B cell (primary cell): ENCODE measurements at regions of chr12 and their contacts with region 1.

Region 1: DNA sequence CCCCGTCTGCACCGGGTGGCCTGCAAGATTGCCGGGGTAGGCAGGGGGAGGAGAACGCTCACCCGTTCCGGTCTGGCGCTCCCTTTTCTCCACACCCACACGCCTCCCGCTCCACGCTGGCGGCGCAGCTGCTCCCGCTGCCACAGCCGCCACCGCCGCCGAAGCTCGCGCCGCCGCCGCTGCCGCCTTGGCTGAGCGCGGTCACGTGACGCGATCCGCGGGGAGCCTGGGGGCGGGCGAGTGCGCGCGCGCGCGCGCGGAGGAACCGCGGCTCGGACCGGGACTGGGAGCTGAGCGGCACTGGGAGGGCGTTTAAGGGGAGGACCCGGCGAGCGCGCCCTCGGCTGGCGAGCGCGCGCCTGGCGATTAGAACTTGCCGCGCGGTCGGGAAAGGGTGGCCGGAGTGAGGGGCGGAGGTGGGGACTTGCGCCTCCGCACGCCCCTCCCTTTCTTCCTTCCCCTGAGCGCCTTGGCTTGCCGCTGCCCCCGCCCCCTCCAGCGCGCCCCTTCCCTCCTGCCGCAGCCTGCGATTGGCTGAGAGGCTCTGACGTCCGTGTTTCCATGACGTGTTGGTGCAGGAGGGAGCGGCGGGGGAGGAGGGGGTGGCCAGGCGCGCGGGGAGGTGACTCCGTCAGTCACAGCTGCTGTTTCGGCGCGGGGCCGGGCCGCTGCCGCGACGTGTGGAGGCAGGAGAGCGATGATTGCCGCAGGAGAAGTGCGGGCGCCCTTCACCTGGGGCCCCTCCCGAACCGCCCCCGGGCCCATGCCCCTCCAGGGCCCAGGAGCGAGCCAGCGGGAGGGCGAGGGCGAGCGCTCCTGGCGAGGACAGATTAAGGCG is 738 bp upstream of the ATP2B1 start:
- DNase-seq: peak; percentile 100
- ATAC-seq: peak; percentile 72
- H3K4me3 ChIP-seq: peak overlapping the region; percentile 84 to 99 (median 97)
- H3K4me3 Mint-ChIP-seq: peak overlapping the region; percentile 93
- H3K27ac ChIP-seq: peak overlapping the region; percentile 95 to 99
- H3K27ac Mint-ChIP-seq: peak overlapping the region; percentile 98
- H3K4me1 ChIP-seq: peaks cover 15 to 31% of the 10 kb centered on the region in 2 donors
- H3K4me1 Mint-ChIP-seq: peaks cover 33% of the 10 kb centered on the region
- H3K27me3 ChIP-seq: no peaks in the 10 kb centered on the region
- H3K27me3 Mint-ChIP-seq: no peaks in the 10 kb centered on the region
- CTCF ChIP-seq: no peak

Region 2: DNA sequence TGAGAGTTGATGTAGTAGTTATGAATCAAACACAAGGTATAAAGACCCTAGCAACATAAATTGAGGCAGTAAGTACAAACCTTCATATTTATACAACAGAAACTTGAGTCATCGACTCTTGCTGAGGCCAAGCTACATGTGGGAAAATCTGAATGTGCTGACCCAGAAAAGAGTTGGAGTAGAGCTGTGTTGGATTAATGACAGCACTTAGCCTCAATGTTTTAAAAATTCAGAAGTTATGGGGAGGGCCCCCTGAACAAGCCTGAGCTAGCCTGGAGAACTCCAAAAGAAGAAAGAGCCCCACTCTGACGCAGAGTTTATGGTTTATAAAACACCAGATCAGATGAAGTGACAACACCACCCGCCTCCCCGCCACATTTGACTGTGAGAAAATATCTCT is 457.1 kb before region 1 on chr12:
- CTCF ChIA-PET with region 1: no interaction called
- POLR2A ChIA-PET with region 1: no interaction called
- intact Hi-C with region 1: no loop called
- DNase-seq: no peak
- ATAC-seq: no peak
- H3K4me3 ChIP-seq: no peak overlapping the region
- H3K4me3 Mint-ChIP-seq: no peak overlapping the region
- H3K27ac ChIP-seq: no peak overlapping the region
- H3K27ac Mint-ChIP-seq: no peak overlapping the region
- H3K4me1 ChIP-seq: no peaks in the 10 kb centered on the region
- H3K4me1 Mint-ChIP-seq: no peaks in the 10 kb centered on the region
- H3K27me3 ChIP-seq: no peaks in the 10 kb centered on the region
- H3K27me3 Mint-ChIP-seq: peaks cover 17% of the 10 kb centered on the region
- CTCF ChIP-seq: no peak

Region 3: DNA sequence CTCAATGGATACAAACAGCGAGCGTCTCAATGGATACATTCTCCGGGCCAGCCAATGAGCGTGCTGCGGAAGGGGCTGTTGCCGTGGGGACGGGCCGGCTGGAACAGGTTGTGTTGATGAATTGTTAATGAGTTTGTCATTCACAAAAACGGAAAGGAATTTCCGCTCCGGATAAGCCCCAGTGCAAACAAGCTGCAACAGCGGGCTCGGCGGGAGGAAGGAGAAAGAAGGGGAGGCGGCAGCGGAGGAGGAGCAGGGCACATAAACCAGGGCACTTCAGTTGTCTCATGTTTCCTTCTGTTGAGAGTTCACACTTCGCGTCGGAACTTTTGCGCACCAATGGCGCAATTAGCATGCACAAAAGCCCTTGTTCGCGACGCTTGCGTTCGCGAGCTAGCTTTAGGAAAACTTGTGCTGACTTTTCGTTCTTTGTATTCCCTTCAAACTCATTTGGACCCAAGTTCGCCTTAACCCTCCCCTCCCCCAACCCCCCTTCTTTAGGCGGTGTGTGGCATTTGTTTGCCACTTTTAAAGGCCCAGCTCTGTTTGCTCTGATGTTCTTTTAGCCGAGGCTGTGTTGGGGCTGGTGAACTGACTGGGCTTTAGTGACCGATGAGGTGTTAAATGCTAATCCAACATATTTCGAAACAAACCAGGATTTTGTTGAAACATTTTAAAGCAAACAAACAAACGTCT is 356.7 kb before region 1 on chr12 and contains the start of gene DUSP6:
- CTCF ChIA-PET with region 1: no interaction called
- POLR2A ChIA-PET with region 1: no interaction called
- intact Hi-C with region 1: loop called (anchors 5 kb)
- DNase-seq: peak; percentile 88
- ATAC-seq: peak; percentile 64
- H3K4me3 ChIP-seq: peak within 1 kb of the TSS; percentile 63 to 94 (median 78)
- H3K4me3 Mint-ChIP-seq: peak within 1 kb of the TSS; percentile 97
- H3K27ac ChIP-seq: peak within 1 kb of the TSS; percentile 82 to 87
- H3K27ac Mint-ChIP-seq: peak within 1 kb of the TSS; percentile 96
- H3K4me1 ChIP-seq: peaks cover 44 to 52% of the 10 kb centered on the region in 2 donors
- H3K4me1 Mint-ChIP-seq: peaks cover 68% of the 10 kb centered on the region
- H3K27me3 ChIP-seq: no peaks in the 10 kb centered on the region
- H3K27me3 Mint-ChIP-seq: no peaks in the 10 kb centered on the region
- CTCF ChIP-seq: no peak
- total RNA-seq, gene DUSP6: 1.6 and 3.2 TPM in 2 replicates

Region 4: DNA sequence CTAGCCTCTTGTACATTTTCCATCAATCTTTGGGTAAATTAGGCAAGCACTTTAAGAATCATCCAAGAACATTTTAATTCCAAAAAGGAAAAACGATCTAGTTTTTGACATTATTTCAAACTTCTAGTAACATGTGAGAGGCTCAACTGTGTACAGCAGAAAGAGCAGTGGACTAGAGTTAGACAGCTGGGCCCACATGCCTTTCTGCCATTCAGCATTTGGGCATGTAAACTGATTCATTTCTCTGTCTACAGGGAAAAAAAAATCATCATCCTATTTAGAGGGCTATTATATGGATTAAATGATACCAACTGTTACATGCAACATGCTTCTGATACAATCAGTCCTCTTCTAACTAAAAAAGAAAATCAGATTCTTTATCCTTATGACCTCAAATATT is 18.5 kb before region 1 on chr12:
- CTCF ChIA-PET with region 1: no interaction called
- POLR2A ChIA-PET with region 1: no interaction called
- intact Hi-C with region 1: no loop called
- DNase-seq: no peak
- ATAC-seq: no peak
- H3K4me3 ChIP-seq: no peak overlapping the region
- H3K4me3 Mint-ChIP-seq: no peak overlapping the region
- H3K27ac ChIP-seq: no peak overlapping the region
- H3K27ac Mint-ChIP-seq: no peak overlapping the region
- H3K4me1 ChIP-seq: peaks cover 22 to 61% of the 10 kb centered on the region in 2 donors
- H3K4me1 Mint-ChIP-seq: peaks cover 75% of the 10 kb centered on the region
- H3K27me3 ChIP-seq: no peaks in the 10 kb centered on the region
- H3K27me3 Mint-ChIP-seq: no peaks in the 10 kb centered on the region
- CTCF ChIP-seq: no peak

Region 5: DNA sequence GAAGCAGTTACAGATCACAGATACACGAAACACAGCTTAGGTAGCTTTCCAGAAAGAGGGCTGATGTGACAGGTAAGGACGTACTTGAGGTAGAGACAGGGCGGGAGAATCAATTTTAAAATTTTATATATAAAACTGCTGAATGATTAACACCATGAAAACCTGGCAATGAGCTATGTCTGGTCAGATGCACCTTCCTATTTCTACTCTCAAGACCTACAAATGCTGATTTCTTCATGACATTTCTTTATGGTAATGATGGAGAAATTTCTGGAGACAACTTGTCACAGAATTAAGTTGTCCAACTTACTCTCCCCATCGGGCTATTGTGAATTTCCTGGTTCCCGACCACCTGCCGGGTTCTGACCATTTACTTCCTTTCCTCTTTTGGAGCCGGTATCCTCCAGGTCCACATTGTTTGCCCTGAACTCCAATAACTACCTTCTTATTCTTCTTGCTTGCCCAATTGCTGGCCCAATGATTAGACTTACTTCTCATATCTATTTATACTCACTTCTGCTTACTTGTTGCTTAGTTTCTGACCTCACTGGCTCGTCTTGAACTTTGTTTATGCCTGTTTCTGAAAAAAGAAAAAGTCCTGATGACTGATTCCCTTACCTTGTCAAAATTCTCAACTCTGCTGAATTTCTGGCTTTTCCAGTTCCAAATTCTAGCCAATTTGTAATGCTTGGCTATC is 12.1 kb after region 1 on chr12:
- CTCF ChIA-PET with region 1: interaction called, 5 read pairs
- POLR2A ChIA-PET with region 1: interaction called, 8 read pairs
- intact Hi-C with region 1: loop called (anchors 1 kb)
- DNase-seq: peak; percentile 78
- ATAC-seq: peak; percentile 94
- H3K4me3 ChIP-seq: peak overlapping the region; percentile 2 to 46 (median 12)
- H3K4me3 Mint-ChIP-seq: peak overlapping the region; percentile 74
- H3K27ac ChIP-seq: peak overlapping the region; percentile 71 to 91
- H3K27ac Mint-ChIP-seq: peak overlapping the region; percentile 93
- H3K4me1 ChIP-seq: peaks cover 20 to 28% of the 10 kb centered on the region in 2 donors
- H3K4me1 Mint-ChIP-seq: peaks cover 39% of the 10 kb centered on the region
- H3K27me3 ChIP-seq: no peaks in the 10 kb centered on the region
- H3K27me3 Mint-ChIP-seq: no peaks in the 10 kb centered on the region
- CTCF ChIP-seq: no peak

Region 6: DNA sequence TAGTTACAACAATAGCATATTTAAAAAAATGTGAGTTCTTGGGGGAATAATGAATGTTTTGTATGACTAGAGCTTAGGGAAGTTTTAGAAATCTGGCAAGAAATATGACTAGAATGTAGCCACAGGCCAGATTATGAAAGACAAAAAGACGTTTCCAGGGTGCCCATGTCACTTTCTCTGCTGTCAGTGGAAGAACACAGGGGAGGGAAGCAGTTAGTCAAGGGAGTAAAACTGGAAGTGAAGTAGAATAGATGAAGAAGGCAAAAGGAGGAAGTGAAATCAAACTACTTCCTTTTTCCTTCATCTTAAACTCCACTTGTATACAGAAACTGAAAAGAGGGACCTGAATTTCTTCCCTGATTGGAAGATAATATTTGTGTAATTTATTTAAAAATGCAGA is 80.5 kb after region 1 on chr12:
- CTCF ChIA-PET with region 1: no interaction called
- POLR2A ChIA-PET with region 1: no interaction called
- intact Hi-C with region 1: loop called (anchors 1 kb)
- DNase-seq: peak; percentile 83
- ATAC-seq: peak; percentile 95
- H3K4me3 ChIP-seq: no peak overlapping the region
- H3K4me3 Mint-ChIP-seq: peak overlapping the region; percentile 62
- H3K27ac ChIP-seq: peak overlapping the region; percentile 32 to 58
- H3K27ac Mint-ChIP-seq: peak overlapping the region; percentile 81
- H3K4me1 ChIP-seq: peaks cover 11% of the 10 kb centered on the region in 2 donors
- H3K4me1 Mint-ChIP-seq: peaks cover 27% of the 10 kb centered on the region
- H3K27me3 ChIP-seq: no peaks in the 10 kb centered on the region
- H3K27me3 Mint-ChIP-seq: no peaks in the 10 kb centered on the region
- CTCF ChIP-seq: no peak

Region 7: DNA sequence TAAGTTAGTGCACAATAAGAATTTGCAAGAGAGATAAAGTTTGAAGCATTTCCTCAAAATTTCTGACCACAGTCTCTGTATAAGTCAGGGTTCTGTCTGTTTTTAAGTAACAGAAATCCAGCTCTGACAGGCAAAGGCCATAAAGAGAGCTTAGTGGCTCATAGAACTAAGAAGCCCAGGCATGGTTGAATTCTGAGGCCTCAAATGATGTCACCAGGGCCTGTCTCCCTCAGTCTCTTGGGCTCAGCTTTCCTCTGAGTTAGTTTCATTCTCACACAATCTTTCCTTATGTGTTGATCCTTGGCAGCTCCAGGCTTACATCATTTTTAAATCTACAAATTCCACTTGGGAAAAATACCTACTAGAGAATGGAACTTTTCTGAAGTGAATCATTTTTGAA is 172.7 kb after region 1 on chr12:
- CTCF ChIA-PET with region 1: interaction called, 5 read pairs
- POLR2A ChIA-PET with region 1: interaction called, 23 read pairs
- intact Hi-C with region 1: loop called (anchors 1 kb)
- DNase-seq: peak; percentile 58
- ATAC-seq: peak; percentile 22
- H3K4me3 ChIP-seq: peak overlapping the region in 1 of 5 experiments; percentile 3
- H3K4me3 Mint-ChIP-seq: peak overlapping the region; percentile 89
- H3K27ac ChIP-seq: peak overlapping the region; percentile 94 to 95
- H3K27ac Mint-ChIP-seq: peak overlapping the region; percentile 99
- H3K4me1 ChIP-seq: peaks cover 45 to 52% of the 10 kb centered on the region in 2 donors
- H3K4me1 Mint-ChIP-seq: peaks cover 52% of the 10 kb centered on the region
- H3K27me3 ChIP-seq: no peaks in the 10 kb centered on the region
- H3K27me3 Mint-ChIP-seq: no peaks in the 10 kb centered on the region
- CTCF ChIP-seq: no peak

Region 8: DNA sequence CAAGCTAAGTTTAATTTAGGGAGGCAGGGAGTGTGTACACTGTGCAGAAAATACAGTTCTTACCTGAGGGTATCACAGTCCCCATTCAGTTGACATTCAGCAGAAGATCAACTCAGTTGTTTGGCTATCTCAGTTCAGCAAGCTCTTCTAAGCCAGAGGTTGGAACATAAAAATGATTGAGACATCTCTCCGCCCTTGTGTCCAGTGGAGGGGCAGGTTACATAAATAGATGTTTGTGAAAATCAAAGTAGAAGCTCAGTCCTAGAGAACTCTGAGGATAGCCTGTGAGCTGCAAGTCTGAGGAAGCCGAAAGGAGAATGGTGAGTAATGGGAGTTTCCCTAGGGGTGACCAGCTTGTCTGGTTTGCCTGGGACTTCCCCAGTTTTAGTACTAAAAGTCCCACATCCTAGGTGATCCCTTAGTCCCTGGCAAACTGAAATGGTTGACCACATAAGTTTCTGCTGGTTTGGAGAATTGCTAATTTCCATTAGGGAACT is 250.7 kb after region 1 on chr12:
- CTCF ChIA-PET with region 1: interaction called, 4 read pairs
- POLR2A ChIA-PET with region 1: interaction called, 13 read pairs
- intact Hi-C with region 1: no loop called
- DNase-seq: peak; percentile 66
- ATAC-seq: peak; percentile 86
- H3K4me3 ChIP-seq: no peak overlapping the region
- H3K4me3 Mint-ChIP-seq: peak overlapping the region; percentile 69
- H3K27ac ChIP-seq: no peak overlapping the region
- H3K27ac Mint-ChIP-seq: peak overlapping the region; percentile 77
- H3K4me1 ChIP-seq: peaks cover 16 to 18% of the 10 kb centered on the region in 2 donors
- H3K4me1 Mint-ChIP-seq: peaks cover 34% of the 10 kb centered on the region
- H3K27me3 ChIP-seq: no peaks in the 10 kb centered on the region
- H3K27me3 Mint-ChIP-seq: no peaks in the 10 kb centered on the region
- CTCF ChIP-seq: no peak

Region 9: DNA sequence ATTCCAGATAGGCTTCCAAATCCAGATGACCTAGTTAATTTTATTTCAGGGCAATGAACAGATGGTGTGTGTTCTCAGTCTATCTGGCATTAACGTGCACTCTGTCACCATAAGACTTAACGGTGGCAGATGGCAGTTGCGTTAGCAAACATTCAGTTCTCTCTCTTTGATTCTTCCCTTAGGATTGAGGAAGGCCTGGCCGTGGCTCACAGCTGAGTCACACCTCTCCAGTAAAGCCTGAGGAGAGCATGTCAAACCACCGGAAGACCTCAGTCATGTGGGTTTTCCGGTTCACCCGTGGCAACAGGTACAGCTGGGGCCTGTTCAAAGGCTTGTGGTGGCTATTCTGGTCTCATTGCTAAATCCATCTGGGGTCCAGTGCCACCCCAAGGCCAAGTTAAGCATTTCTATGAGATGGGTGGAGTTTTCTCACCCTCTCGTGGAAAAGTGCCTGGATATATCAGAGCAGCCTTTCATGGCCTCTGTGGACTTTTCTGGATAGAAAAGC is 544.4 kb after region 1 on chr12:
- CTCF ChIA-PET with region 1: interaction called, 3 read pairs
- POLR2A ChIA-PET with region 1: interaction called, 4 read pairs
- intact Hi-C with region 1: loop called (anchors 1 kb)
- DNase-seq: peak; percentile 88
- ATAC-seq: peak; percentile 92
- H3K4me3 ChIP-seq: peak overlapping the region in 1 of 5 experiments; percentile 3
- H3K4me3 Mint-ChIP-seq: peak overlapping the region; percentile 86
- H3K27ac ChIP-seq: peak overlapping the region; percentile 60 to 64
- H3K27ac Mint-ChIP-seq: peak overlapping the region; percentile 97
- H3K4me1 ChIP-seq: peaks cover 22 to 27% of the 10 kb centered on the region in 2 donors
- H3K4me1 Mint-ChIP-seq: peaks cover 24% of the 10 kb centered on the region
- H3K27me3 ChIP-seq: no peaks in the 10 kb centered on the region
- H3K27me3 Mint-ChIP-seq: no peaks in the 10 kb centered on the region
- CTCF ChIP-seq: peak; percentile 66